ENCODE measurements at regions of chr20 and their contacts with region 1.

Region 1: GRCh38 chr20:46757754-46758678 is 48.6 kb downstream of the SLC2A10 start:
- DNase-seq: peak; percentile 81
- H3K4me3 Mint-ChIP-seq: no peak overlapping the region
- H3K27ac Mint-ChIP-seq: no peak overlapping the region
- H3K4me1 Mint-ChIP-seq: peaks cover 9% of the 10 kb centered on the region
- H3K27me3 Mint-ChIP-seq: peaks cover 45% of the 10 kb centered on the region
- CTCF ChIP-seq: peak; percentile 99

Region 2: GRCh38 chr20:47013607-47014006 is 255.6 kb after region 1 on chr20:
- CTCF ChIA-PET with region 1: no interaction called
- intact Hi-C with region 1: loop called (anchors 2 kb)
- DNase-seq: no peak
- H3K4me3 Mint-ChIP-seq: no peak overlapping the region
- H3K27ac Mint-ChIP-seq: no peak overlapping the region
- H3K4me1 Mint-ChIP-seq: no peaks in the 10 kb centered on the region
- H3K27me3 Mint-ChIP-seq: peaks cover 52% of the 10 kb centered on the region
- CTCF ChIP-seq: no peak

Region 3: DNA sequence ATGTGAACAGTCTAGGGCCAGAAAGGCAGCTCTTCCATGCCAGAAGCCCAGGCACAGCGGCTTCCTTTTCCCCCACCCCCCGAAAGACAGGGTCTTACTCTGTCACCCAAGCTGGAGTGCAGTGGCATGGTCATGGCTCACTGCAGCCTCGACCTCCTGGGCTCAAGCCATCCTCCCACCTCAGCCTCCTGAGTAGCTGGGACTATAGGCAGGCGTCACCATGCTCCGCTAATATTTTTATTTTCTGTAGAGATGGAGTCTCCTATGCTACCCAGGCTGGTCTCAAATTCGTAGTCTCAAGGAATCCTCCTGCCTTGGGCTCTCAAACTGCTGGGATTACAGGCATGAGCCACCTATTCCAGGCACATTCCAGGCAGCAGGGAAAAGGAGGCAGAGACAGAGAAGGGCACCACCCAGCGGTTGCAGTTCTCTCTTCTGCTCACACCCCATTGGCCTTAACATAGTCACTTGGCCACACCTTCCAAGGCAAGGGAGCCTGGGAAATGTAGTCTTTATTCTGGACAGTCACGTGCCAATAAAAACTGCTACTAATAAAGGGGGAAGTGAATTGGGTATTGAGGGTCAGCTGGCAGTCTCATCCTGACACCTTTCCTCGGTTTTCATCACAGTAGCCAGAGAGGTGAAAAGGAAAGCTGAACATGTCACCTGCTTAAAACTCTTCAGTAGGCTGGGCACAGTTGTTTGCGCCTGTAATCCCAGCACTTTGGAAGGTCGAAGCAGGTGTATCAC is 392.6 kb after region 1 on chr20:
- CTCF ChIA-PET with region 1: interaction called, 9 read pairs
- intact Hi-C with region 1: loop called (anchors 2 kb)
- DNase-seq: peak; percentile 86
- H3K4me3 Mint-ChIP-seq: no peak overlapping the region
- H3K27ac Mint-ChIP-seq: no peak overlapping the region
- H3K4me1 Mint-ChIP-seq: peaks cover 45% of the 10 kb centered on the region
- H3K27me3 Mint-ChIP-seq: peaks cover 14% of the 10 kb centered on the region
- CTCF ChIP-seq: peak; percentile 61